ENCODE measurements at regions of chr13 and their contacts with region 1.

Region 1: GRCh38 chr13:50911937-50912795 is 2.6 kb downstream of the RNASEH2B start:
- DNase-seq: peak; percentile 97
- H3K4me3 Mint-ChIP-seq: peak overlapping the region; percentile 94
- H3K27ac Mint-ChIP-seq: peak overlapping the region; percentile 75
- H3K4me1 Mint-ChIP-seq: peaks cover 46% of the 10 kb centered on the region
- H3K27me3 Mint-ChIP-seq: no peaks in the 10 kb centered on the region

Region 2: GRCh38 chr13:49936085-49936940 is 975.9 kb before region 1 on chr13 and contains the start of gene SPRYD7:
- CTCF ChIA-PET with region 1: interaction called, 4 read pairs
- intact Hi-C with region 1: loop called (anchors 1 kb)
- DNase-seq: peak; percentile 96
- H3K4me3 Mint-ChIP-seq: peak within 1 kb of the TSS; percentile 90
- H3K27ac Mint-ChIP-seq: peak within 1 kb of the TSS; percentile 70
- H3K4me1 Mint-ChIP-seq: peaks cover 7% of the 10 kb centered on the region
- H3K27me3 Mint-ChIP-seq: peaks cover 2% of the 10 kb centered on the region
- total RNA-seq, gene SPRYD7: 2.5 to 2.6 TPM

Region 3: GRCh38 chr13:50123862-50124536 is 788.2 kb before region 1 on chr13:
- CTCF ChIA-PET with region 1: interaction called, 4 read pairs
- intact Hi-C with region 1: loop called (anchors 2 kb)
- DNase-seq: peak; percentile 89
- H3K4me3 Mint-ChIP-seq: peak overlapping the region; percentile 77
- H3K27ac Mint-ChIP-seq: peak overlapping the region; percentile 92
- H3K4me1 Mint-ChIP-seq: peaks cover 48% of the 10 kb centered on the region
- H3K27me3 Mint-ChIP-seq: peaks cover 15% of the 10 kb centered on the region

Region 4: GRCh38 chr13:50365408-50366391 is 546.5 kb before region 1 on chr13:
- CTCF ChIA-PET with region 1: no interaction called
- intact Hi-C with region 1: loop called (anchors 5 kb)
- DNase-seq: peak; percentile 62
- H3K4me3 Mint-ChIP-seq: no peak overlapping the region
- H3K27ac Mint-ChIP-seq: no peak overlapping the region
- H3K4me1 Mint-ChIP-seq: peaks cover 38% of the 10 kb centered on the region
- H3K27me3 Mint-ChIP-seq: peaks cover 12% of the 10 kb centered on the region

Region 5: GRCh38 chr13:50594276-50595051 is 317.7 kb before region 1 on chr13:
- CTCF ChIA-PET with region 1: interaction called, 4 read pairs
- intact Hi-C with region 1: loop called (anchors 5 kb)
- DNase-seq: peak; percentile 64
- H3K4me3 Mint-ChIP-seq: peak overlapping the region; percentile 36
- H3K27ac Mint-ChIP-seq: peak overlapping the region; percentile 10
- H3K4me1 Mint-ChIP-seq: peaks cover 30% of the 10 kb centered on the region
- H3K27me3 Mint-ChIP-seq: no peaks in the 10 kb centered on the region

Region 6: GRCh38 chr13:50843257-50844083 is 68.7 kb before region 1 on chr13 and contains the start of gene DLEU7:
- CTCF ChIA-PET with region 1: interaction called, 5 read pairs
- intact Hi-C with region 1: loop called (anchors 5 kb)
- DNase-seq: no peak
- H3K4me3 Mint-ChIP-seq: no peak within 1 kb of the TSS
- H3K27ac Mint-ChIP-seq: no peak within 1 kb of the TSS
- H3K4me1 Mint-ChIP-seq: peaks cover 16% of the 10 kb centered on the region
- H3K27me3 Mint-ChIP-seq: peaks cover 17% of the 10 kb centered on the region
- total RNA-seq, gene DLEU7: not detected